ENCODE measurements at regions of chr6 and their contacts with region 1.

Region 1: GRCh38 chr6:32177788-32178546 is at the start of gene RNF5:
- DNase-seq: peak; percentile 86 to 99 (median 97)
- H3K4me3 ChIP-seq: peak within 1 kb of the TSS; percentile 75
- H3K4me3 Mint-ChIP-seq: peak within 1 kb of the TSS; percentile 82 to 99 (median 95)
- H3K27ac ChIP-seq: peak within 1 kb of the TSS; percentile 93
- H3K27ac Mint-ChIP-seq: peak within 1 kb of the TSS; percentile 92 to 99 (median 98)
- H3K4me1 ChIP-seq: peaks cover 63% of the 10 kb centered on the region
- H3K4me1 Mint-ChIP-seq: peaks cover 61 to 79% (median 78%) of the 10 kb centered on the region in 3 donors
- H3K27me3 ChIP-seq: no peaks in the 10 kb centered on the region
- H3K27me3 Mint-ChIP-seq: no peaks in the 10 kb centered on the region
- total RNA-seq, gene RNF5: 52.7 to 52.9 TPM

Region 2: DNA sequence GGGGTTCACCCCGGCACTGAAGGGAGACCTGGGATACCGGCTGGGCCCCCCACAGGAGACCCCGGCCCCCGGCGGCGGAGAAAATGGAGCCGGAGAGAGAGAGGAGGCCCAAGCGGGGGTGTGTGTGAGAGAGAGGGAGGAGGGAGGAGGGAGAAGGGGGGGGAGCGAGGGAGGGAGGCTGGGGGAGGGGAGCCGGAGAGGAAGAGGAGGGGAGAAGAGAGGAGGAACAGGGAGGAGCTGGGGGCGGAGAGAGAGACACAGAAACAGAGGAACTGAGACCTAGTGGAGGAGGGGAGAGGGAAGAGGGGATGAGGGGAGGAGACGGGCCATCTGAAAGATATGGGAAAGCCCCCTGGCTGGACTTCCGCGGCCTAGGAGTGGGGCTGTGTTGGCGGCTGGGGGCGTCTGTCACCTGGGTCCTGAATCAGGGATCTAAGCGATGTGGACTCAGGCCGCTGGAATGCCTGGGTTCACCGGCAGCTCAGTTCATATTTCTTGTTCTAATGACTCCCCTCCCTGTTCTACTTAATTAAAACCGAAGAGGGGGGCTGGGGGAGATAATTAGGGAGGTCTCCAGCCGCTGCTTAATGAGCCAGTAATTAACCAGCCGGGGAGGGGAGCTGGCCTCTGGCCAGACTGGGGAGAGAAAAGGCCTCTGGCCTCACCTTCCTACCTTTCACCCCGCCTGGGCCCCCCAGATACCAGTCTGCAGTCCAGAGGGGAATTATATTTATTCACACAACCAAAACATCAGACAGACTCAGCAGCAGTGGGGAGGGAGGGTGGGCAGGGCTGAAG is 12.3 kb after region 1 on chr6 and contains the start of gene PBX2:
- CTCF ChIA-PET with region 1: interaction called, 19 read pairs
- POLR2A ChIA-PET with region 1: interaction called, 20 read pairs
- DNase-seq: peak; percentile 68 to 85 (median 71)
- H3K4me3 ChIP-seq: peak within 1 kb of the TSS; percentile 95
- H3K4me3 Mint-ChIP-seq: peak within 1 kb of the TSS; percentile 92 to 100 (median 97)
- H3K27ac ChIP-seq: peak within 1 kb of the TSS; percentile 85
- H3K27ac Mint-ChIP-seq: peak within 1 kb of the TSS; percentile 95 to 99 (median 98)
- H3K4me1 ChIP-seq: peaks cover 62% of the 10 kb centered on the region
- H3K4me1 Mint-ChIP-seq: peaks cover 57 to 78% (median 64%) of the 10 kb centered on the region in 3 donors
- H3K27me3 ChIP-seq: no peaks in the 10 kb centered on the region
- H3K27me3 Mint-ChIP-seq: peaks cover 0 to 4% of the 10 kb centered on the region in 2 donors
- total RNA-seq, gene PBX2: 63.5 to 69.4 TPM

Region 3: GRCh38 chr6:32195652-32195901 is 17.6 kb after region 1 on chr6:
- CTCF ChIA-PET with region 1: interaction called, 19 read pairs
- POLR2A ChIA-PET with region 1: interaction called, 20 read pairs
- DNase-seq: peak; percentile 99 to 100 (median 100)
- H3K4me3 ChIP-seq: peak overlapping the region; percentile 78
- H3K4me3 Mint-ChIP-seq: peak overlapping the region; percentile 92 to 100 (median 96)
- H3K27ac ChIP-seq: peak overlapping the region; percentile 99
- H3K27ac Mint-ChIP-seq: peak overlapping the region; percentile 98 to 100 (median 100)
- H3K4me1 ChIP-seq: peaks cover 34% of the 10 kb centered on the region
- H3K4me1 Mint-ChIP-seq: peaks cover 31 to 46% (median 33%) of the 10 kb centered on the region in 3 donors
- H3K27me3 ChIP-seq: no peaks in the 10 kb centered on the region
- H3K27me3 Mint-ChIP-seq: peaks cover 2 to 6% of the 10 kb centered on the region in 2 donors

Measured in CD8-positive, alpha-beta memory T cell (primary cell).